MCF 10A (cell line): ENCODE measurements at regions of chr3 and their contacts with region 1.

Region 1: GRCh38 chr3:167882067-167882667 is 146.6 kb downstream of the SERPINI1 start:
- DNase-seq: peak; percentile 62
- H3K4me3 Mint-ChIP-seq: no peak overlapping the region
- H3K27ac Mint-ChIP-seq: no peak overlapping the region
- H3K4me1 Mint-ChIP-seq: peaks cover 6% of the 10 kb centered on the region
- H3K27me3 Mint-ChIP-seq: peaks cover 47% of the 10 kb centered on the region
- CTCF ChIP-seq: peak; percentile 54

Region 2: GRCh38 chr3:167209021-167209420 is 673.1 kb before region 1 on chr3:
- CTCF ChIA-PET with region 1: no interaction called
- POLR2A ChIA-PET with region 1: no interaction called
- intact Hi-C with region 1: no loop called
- DNase-seq: no peak
- H3K4me3 Mint-ChIP-seq: no peak overlapping the region
- H3K27ac Mint-ChIP-seq: no peak overlapping the region
- H3K4me1 Mint-ChIP-seq: no peaks in the 10 kb centered on the region
- H3K27me3 Mint-ChIP-seq: no peaks in the 10 kb centered on the region
- CTCF ChIP-seq: no peak

Region 3: DNA sequence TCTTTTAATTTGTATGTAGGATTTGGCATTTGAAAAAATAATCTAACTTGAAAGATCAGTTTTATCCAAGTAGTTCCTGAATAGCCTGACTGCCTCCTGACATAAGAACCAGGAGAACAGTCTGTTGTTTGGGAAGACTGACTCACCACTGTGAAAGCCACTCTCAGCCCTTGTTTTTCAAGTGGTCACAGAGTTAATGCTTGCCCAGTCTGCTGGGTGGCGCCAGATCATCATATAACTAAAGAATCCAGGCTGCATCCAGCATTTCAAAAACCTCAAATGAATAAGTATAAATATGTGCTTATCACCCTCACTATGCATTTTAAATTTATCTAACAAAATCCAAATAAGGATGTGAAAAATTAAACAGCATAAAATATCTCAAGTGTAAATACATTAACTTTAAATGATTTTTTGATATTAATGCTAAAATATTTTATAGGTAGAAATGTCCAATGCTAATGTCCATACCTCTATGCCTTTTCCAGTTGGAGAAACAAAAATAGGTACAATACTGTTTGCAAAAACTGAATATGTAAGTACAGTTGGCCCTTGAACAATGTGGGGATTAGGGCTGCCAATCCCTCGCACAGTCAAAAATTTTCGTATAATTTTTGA is 475.2 kb before region 1 on chr3:
- CTCF ChIA-PET with region 1: no interaction called
- POLR2A ChIA-PET with region 1: no interaction called
- intact Hi-C with region 1: loop called (anchors 1 kb)
- DNase-seq: peak; percentile 85
- H3K4me3 Mint-ChIP-seq: no peak overlapping the region
- H3K27ac Mint-ChIP-seq: no peak overlapping the region
- H3K4me1 Mint-ChIP-seq: no peaks in the 10 kb centered on the region
- H3K27me3 Mint-ChIP-seq: peaks cover 28% of the 10 kb centered on the region
- CTCF ChIP-seq: peak; percentile 59

Region 4: DNA sequence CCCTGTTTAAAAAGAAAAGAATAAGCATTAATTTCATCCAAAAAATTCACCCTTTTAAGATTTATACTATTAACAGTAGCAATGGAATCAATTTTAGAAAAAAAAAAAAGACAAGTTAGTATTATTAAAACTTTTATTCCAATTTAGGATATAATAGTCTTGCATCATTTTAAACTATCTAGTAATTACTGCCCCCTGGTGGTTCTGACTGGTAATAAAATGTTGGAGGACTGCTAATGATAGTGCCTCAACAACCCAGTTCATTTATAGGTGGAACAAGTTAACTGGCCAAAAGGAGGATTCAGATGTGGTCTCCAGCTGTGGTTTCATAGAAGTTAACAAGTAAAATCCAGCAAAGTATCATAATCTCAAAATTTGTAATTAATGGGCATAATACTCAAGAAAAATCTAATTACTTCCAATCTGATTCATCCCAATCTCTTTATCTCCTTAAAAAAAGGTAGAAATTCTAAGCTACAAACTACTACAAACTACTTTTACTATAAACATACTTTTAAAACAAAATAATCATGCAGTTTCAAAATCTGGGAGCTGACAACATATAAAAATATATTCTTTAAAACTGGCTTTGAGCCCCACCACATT is 197.7 kb before region 1 on chr3:
- CTCF ChIA-PET with region 1: interaction called, 3 read pairs
- POLR2A ChIA-PET with region 1: no interaction called
- intact Hi-C with region 1: loop called (anchors 5 kb)
- DNase-seq: peak; percentile 78
- H3K4me3 Mint-ChIP-seq: no peak overlapping the region
- H3K27ac Mint-ChIP-seq: no peak overlapping the region
- H3K4me1 Mint-ChIP-seq: no peaks in the 10 kb centered on the region
- H3K27me3 Mint-ChIP-seq: no peaks in the 10 kb centered on the region
- CTCF ChIP-seq: peak; percentile 51

Region 5: GRCh38 chr3:167734498-167735232 is 147.5 kb before region 1 on chr3 and contains the start of gene PDCD10:
- CTCF ChIA-PET with region 1: no interaction called
- POLR2A ChIA-PET with region 1: interaction called, 8 read pairs
- intact Hi-C with region 1: loop called (anchors 5 kb)
- DNase-seq: peak; percentile 100
- H3K4me3 Mint-ChIP-seq: no peak within 1 kb of the TSS
- H3K27ac Mint-ChIP-seq: no peak within 1 kb of the TSS
- H3K4me1 Mint-ChIP-seq: peaks cover 22% of the 10 kb centered on the region
- H3K27me3 Mint-ChIP-seq: no peaks in the 10 kb centered on the region
- CTCF ChIP-seq: no peak
- total RNA-seq, gene PDCD10: 62.9 and 63.3 TPM in 2 replicates

Region 6: GRCh38 chr3:167837466-167837865 is 44.7 kb before region 1 on chr3:
- CTCF ChIA-PET with region 1: interaction called, 28 read pairs
- POLR2A ChIA-PET with region 1: interaction called, 3 read pairs
- intact Hi-C with region 1: loop called (anchors 1 kb)
- DNase-seq: peak; percentile 25
- H3K4me3 Mint-ChIP-seq: no peak overlapping the region
- H3K27ac Mint-ChIP-seq: no peak overlapping the region
- H3K4me1 Mint-ChIP-seq: no peaks in the 10 kb centered on the region
- H3K27me3 Mint-ChIP-seq: peaks cover 16% of the 10 kb centered on the region
- CTCF ChIP-seq: peak; percentile 18

Region 7: DNA sequence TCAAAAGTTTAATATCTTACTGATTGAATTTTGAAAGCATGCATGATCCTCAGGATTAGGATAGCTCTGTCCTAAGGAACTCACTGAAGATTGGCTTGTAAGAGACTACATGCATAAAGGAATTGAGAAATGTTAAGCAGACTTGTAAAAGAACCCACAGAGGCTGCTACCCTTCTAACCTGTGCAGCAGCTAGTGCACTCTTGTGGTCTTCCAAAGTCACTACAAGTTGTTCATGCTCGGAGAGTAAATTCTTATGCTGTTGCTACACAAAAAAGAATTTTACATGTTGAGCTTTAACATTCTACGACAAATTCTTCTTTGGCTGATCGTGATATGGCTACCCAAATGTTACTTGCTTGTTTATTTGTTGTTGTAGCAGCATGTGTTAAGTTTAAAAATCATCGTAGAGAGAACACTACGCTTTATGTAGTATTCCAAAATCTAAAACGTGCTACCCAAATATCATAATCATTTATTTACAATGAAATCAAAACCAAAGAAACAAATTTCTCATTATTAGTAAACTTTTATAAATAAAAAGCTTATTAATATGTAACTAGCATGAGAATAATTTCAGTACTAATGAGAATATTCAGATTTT is 158.5 kb after region 1 on chr3:
- CTCF ChIA-PET with region 1: interaction called, 10 read pairs
- POLR2A ChIA-PET with region 1: no interaction called
- intact Hi-C with region 1: no loop called
- DNase-seq: peak; percentile 70
- H3K4me3 Mint-ChIP-seq: no peak overlapping the region
- H3K27ac Mint-ChIP-seq: no peak overlapping the region
- H3K4me1 Mint-ChIP-seq: no peaks in the 10 kb centered on the region
- H3K27me3 Mint-ChIP-seq: no peaks in the 10 kb centered on the region
- CTCF ChIP-seq: peak; percentile 45